MCF 10A (cell line): ENCODE measurements at regions of chr21 and their contacts with region 1.

Region 1: DNA sequence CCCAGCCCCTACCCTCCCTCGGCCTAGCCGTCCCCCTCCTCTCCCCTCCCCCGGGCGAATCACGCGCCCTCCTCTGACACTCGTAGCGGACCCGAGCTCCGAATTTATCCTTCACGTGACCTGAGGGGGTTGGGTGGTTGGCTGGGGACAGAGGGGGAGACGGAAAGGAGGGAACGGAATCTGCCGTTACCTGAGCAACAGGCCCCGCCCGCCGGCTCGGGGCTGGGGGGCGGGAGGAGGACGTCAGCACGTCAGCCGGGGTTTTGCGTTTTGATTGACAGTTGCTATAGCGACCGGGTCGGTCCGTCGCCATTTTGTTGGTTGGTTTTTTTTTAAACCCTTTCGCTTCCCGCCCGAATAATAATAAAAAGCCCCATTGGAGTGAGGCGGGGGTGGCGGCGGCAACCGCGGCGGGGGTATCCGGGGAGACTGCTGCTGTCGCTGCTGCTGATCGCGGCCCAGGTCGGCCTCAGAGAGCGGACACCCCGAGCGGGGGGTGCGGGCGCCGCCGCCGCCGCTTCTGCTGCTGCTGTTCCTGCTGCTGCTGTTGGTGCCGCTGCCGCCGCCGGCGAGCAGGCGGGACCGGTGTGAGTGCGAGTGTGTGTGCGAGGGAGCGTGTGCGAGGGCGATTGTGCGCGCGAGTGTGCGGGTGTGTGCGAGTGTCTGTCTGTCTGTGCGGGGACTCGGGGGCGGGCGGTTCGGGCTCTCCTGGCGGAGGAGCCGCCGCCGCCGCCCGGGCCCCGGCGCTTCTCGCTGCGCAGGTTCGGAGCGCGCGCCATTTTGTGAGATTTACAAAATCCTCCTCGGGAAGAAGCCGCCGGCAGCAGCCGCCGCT is at the start of gene DYRK1A:
- DNase-seq: peak; percentile 99
- H3K4me3 Mint-ChIP-seq: peak within 1 kb of the TSS; percentile 99
- H3K27ac Mint-ChIP-seq: peak within 1 kb of the TSS; percentile 100
- H3K4me1 Mint-ChIP-seq: peaks cover 28% of the 10 kb centered on the region
- H3K27me3 Mint-ChIP-seq: no peaks in the 10 kb centered on the region
- CTCF ChIP-seq: no peak
- total RNA-seq, gene DYRK1A: 58.6 and 63.1 TPM in 2 replicates

Region 2: DNA sequence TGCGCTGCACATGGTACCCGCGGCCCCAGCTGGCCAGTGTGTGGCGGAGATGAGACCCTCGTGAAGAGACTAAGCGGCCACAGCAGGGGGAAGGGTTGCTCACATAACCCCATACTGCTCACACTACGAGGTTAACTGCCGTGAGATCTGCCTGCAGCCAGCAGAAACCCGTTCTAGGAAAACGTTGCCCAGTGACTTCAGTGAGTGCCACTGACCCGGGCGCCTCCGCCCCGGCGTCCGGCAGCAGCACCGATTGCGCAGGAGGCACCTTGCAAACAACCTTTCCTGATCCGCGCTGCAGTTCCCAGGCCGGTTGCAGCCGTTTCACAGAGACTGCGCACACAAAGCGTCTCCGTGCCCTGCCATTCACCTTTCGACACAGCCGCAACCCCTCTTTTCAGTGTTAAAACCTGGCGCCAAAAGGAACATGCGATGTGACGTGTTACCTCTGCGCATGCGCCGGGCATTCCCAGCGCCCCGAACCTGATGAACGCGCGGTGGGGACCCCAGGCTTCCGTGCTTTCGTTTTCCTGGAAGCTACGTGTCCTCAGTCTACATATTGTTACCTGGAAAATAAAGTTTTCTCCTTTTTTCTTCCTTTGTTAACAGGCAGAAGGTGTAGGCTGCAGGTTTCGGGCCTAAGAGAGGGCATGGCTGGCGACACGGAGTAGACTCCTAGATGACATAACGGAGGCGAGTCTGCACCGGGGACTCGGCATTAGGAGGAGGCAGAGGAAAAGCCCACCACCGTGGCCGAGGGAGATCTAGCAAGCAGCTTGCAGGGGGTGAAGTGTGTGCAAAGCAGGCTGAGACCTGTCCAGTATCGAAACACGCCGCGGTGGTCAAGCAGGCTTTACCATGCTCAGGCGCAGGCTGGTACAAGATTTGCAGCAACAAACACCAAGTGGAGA is 108.5 kb before region 1 on chr21:
- CTCF ChIA-PET with region 1: no interaction called
- POLR2A ChIA-PET with region 1: interaction called, 101 read pairs
- intact Hi-C with region 1: loop called (anchors 5 kb)
- DNase-seq: peak; percentile 84
- H3K4me3 Mint-ChIP-seq: peak overlapping the region; percentile 75
- H3K27ac Mint-ChIP-seq: peak overlapping the region; percentile 75
- H3K4me1 Mint-ChIP-seq: peaks cover 15% of the 10 kb centered on the region
- H3K27me3 Mint-ChIP-seq: no peaks in the 10 kb centered on the region
- CTCF ChIP-seq: no peak

Region 3: DNA sequence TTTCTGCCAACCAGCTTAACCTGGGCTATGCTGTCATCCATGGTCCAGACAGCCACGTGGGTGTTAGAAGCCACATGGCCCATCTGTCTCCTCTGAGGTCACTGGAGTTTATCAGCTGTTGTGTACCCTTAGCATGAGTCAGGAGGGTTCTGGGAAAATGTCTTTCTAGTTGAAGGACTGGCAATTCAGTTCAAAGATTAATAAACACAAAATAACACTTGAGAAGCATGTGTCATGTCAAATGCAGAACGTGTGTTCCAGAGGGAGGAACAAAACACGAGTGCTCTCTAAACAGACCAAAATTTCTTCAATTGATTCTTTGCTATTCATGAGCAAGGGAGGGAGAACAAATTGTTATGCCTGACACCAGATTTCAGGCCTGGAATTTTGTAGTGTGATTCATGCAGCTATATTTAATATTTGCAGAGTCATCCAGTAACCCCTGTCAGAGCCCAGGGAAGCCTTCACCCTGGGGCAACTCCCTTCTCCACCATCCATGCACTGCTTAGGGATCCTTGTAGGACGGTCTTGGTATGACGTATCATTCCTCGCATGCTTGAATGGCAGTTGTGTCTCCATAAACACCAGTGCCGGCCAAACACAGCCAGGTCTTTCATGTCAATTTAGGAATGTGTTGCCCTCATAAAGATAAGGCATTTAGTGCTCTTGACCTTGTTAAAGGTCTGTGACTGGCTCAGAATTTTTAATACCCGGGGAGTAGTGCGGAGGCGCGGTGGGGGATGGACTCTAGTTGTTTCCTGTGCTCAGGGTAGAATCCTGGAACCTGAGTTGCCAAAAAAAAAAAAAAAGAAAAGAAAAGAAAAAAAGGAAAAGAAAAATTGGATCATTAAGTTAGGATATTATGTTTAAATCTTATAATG is 27.8 kb before region 1 on chr21:
- CTCF ChIA-PET with region 1: interaction called, 4 read pairs
- POLR2A ChIA-PET with region 1: interaction called, 38 read pairs
- intact Hi-C with region 1: loop called (anchors 1 kb)
- DNase-seq: peak; percentile 96
- H3K4me3 Mint-ChIP-seq: peak overlapping the region; percentile 42
- H3K27ac Mint-ChIP-seq: peak overlapping the region; percentile 97
- H3K4me1 Mint-ChIP-seq: peaks cover 25% of the 10 kb centered on the region
- H3K27me3 Mint-ChIP-seq: no peaks in the 10 kb centered on the region
- CTCF ChIP-seq: no peak

Region 4: GRCh38 chr21:37380349-37381323 is 13.9 kb after region 1 on chr21:
- CTCF ChIA-PET with region 1: interaction called, 3 read pairs
- POLR2A ChIA-PET with region 1: interaction called, 26 read pairs
- intact Hi-C with region 1: no loop called
- DNase-seq: peak; percentile 17
- H3K4me3 Mint-ChIP-seq: no peak overlapping the region
- H3K27ac Mint-ChIP-seq: peak overlapping the region; percentile 63
- H3K4me1 Mint-ChIP-seq: peaks cover 42% of the 10 kb centered on the region
- H3K27me3 Mint-ChIP-seq: no peaks in the 10 kb centered on the region
- CTCF ChIP-seq: no peak

Region 5: DNA sequence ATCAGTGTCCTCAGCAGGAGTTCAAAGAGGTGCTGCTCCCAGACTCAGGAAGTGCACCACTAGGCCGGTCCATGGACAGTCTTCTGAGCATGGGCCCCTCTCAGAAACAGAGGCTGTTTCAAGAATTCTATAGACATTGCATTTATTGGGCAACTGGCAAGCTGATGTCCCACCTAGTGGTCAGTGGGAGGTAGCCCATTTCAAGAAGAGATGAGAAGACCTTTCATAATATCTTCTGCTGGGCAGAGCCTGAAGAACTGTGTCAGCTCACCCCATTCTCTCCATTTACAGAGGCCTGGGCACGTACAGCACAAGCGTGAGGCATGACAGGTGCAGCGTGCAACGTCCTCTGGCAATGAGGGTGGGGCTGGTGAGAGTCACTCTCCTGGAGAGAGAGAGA is 215.9 kb after region 1 on chr21:
- CTCF ChIA-PET with region 1: no interaction called
- POLR2A ChIA-PET with region 1: no interaction called
- intact Hi-C with region 1: loop called (anchors 5 kb)
- DNase-seq: peak; percentile 68
- H3K4me3 Mint-ChIP-seq: no peak overlapping the region
- H3K27ac Mint-ChIP-seq: no peak overlapping the region
- H3K4me1 Mint-ChIP-seq: peaks cover 7% of the 10 kb centered on the region
- H3K27me3 Mint-ChIP-seq: no peaks in the 10 kb centered on the region
- CTCF ChIP-seq: peak; percentile 38